CD8-positive, alpha-beta T cell (primary cell): ENCODE measurements at regions of chr2 and their contacts with region 1.

Region 1: GRCh38 chr2:189096769-189097447 is 82.7 kb downstream of the COL5A2 start:
- DNase-seq: no peak
- ATAC-seq: no peak
- H3K4me3 ChIP-seq: no peak overlapping the region
- H3K4me3 Mint-ChIP-seq: no peak overlapping the region
- H3K27ac ChIP-seq: no peak overlapping the region
- H3K27ac Mint-ChIP-seq: no peak overlapping the region
- H3K4me1 ChIP-seq: no peaks in the 10 kb centered on the region
- H3K4me1 Mint-ChIP-seq: no peaks in the 10 kb centered on the region
- H3K27me3 ChIP-seq: peaks cover 0 to 3% of the 10 kb centered on the region in 2 experiments
- H3K27me3 Mint-ChIP-seq: no peaks in the 10 kb centered on the region
- CTCF ChIP-seq: no peak

Region 2: GRCh38 chr2:188524519-188525113 is 572.3 kb before region 1 on chr2:
- CTCF ChIA-PET with region 1: no interaction called
- POLR2A ChIA-PET with region 1: no interaction called
- intact Hi-C with region 1: loop called in 1 of 2 experiments (anchors 10 kb)
- DNase-seq: peak in 2 of 9 experiments; percentile 27 to 37
- ATAC-seq: peak; percentile 48
- H3K4me3 ChIP-seq: no peak overlapping the region
- H3K4me3 Mint-ChIP-seq: no peak overlapping the region
- H3K27ac ChIP-seq: no peak overlapping the region
- H3K27ac Mint-ChIP-seq: no peak overlapping the region
- H3K4me1 ChIP-seq: no peaks in the 10 kb centered on the region
- H3K4me1 Mint-ChIP-seq: no peaks in the 10 kb centered on the region
- H3K27me3 ChIP-seq: no peaks in the 10 kb centered on the region
- H3K27me3 Mint-ChIP-seq: no peaks in the 10 kb centered on the region
- CTCF ChIP-seq: peak; percentile 63

Region 3: GRCh38 chr2:189082376-189082975 is 14.4 kb before region 1 on chr2:
- CTCF ChIA-PET with region 1: interaction called, 15 read pairs
- POLR2A ChIA-PET with region 1: no interaction called
- intact Hi-C with region 1: no loop called
- DNase-seq: no peak
- ATAC-seq: no peak
- H3K4me3 ChIP-seq: no peak overlapping the region
- H3K4me3 Mint-ChIP-seq: no peak overlapping the region
- H3K27ac ChIP-seq: no peak overlapping the region
- H3K27ac Mint-ChIP-seq: no peak overlapping the region
- H3K4me1 ChIP-seq: no peaks in the 10 kb centered on the region
- H3K4me1 Mint-ChIP-seq: no peaks in the 10 kb centered on the region
- H3K27me3 ChIP-seq: no peaks in the 10 kb centered on the region
- H3K27me3 Mint-ChIP-seq: no peaks in the 10 kb centered on the region
- CTCF ChIP-seq: no peak

Region 4: DNA sequence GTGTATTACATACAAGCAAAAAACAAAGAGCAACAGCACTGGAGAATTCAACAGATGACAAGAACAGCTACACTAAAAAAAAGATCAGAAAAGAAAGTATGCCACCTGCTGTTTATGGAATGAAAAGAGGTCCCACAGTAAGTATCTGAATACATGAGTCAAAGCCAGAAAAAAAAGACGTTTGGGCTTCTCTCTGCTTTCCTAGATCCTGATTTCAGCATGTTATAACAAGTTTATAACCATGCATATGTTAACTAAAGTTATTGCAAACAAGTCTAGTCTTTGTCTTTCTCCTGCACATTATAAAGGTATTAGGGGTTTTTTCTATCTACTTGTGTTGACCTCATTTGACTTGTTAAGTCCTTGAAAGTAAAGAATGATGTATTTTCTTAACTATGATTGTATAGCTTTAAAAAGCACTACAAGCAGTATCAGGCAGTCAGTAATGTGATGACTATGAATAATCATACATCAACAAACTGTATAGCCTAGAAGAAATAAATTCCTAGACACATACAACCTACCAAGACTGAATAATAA is 191.1 kb after region 1 on chr2:
- CTCF ChIA-PET with region 1: interaction called, 5 read pairs
- POLR2A ChIA-PET with region 1: no interaction called
- intact Hi-C with region 1: loop called (anchors 1 to 5 kb)
- DNase-seq: peak in 2 of 9 experiments; percentile 33 to 40
- ATAC-seq: no peak
- H3K4me3 ChIP-seq: no peak overlapping the region
- H3K4me3 Mint-ChIP-seq: no peak overlapping the region
- H3K27ac ChIP-seq: no peak overlapping the region
- H3K27ac Mint-ChIP-seq: no peak overlapping the region
- H3K4me1 ChIP-seq: peaks cover 4% of the 10 kb centered on the region
- H3K4me1 Mint-ChIP-seq: peaks cover 11% of the 10 kb centered on the region
- H3K27me3 ChIP-seq: no peaks in the 10 kb centered on the region
- H3K27me3 Mint-ChIP-seq: no peaks in the 10 kb centered on the region
- CTCF ChIP-seq: peak; percentile 41

Region 5: GRCh38 chr2:189347540-189347939 is 250.6 kb after region 1 on chr2:
- CTCF ChIA-PET with region 1: interaction called, 22 read pairs
- POLR2A ChIA-PET with region 1: no interaction called
- intact Hi-C with region 1: loop called (anchors 1 to 2 kb)
- DNase-seq: peak in 3 of 9 experiments; percentile 9 to 61 (median 52)
- ATAC-seq: peak; percentile 38
- H3K4me3 ChIP-seq: no peak overlapping the region
- H3K4me3 Mint-ChIP-seq: no peak overlapping the region
- H3K27ac ChIP-seq: no peak overlapping the region
- H3K27ac Mint-ChIP-seq: no peak overlapping the region
- H3K4me1 ChIP-seq: peaks cover 3% of the 10 kb centered on the region
- H3K4me1 Mint-ChIP-seq: peaks cover 16% of the 10 kb centered on the region
- H3K27me3 ChIP-seq: no peaks in the 10 kb centered on the region
- H3K27me3 Mint-ChIP-seq: no peaks in the 10 kb centered on the region
- CTCF ChIP-seq: peak; percentile 33

Region 6: GRCh38 chr2:189412330-189412953 is 315.5 kb after region 1 on chr2:
- CTCF ChIA-PET with region 1: interaction called, 26 read pairs
- POLR2A ChIA-PET with region 1: no interaction called
- intact Hi-C with region 1: loop called (anchors 1 kb)
- DNase-seq: peak in 7 of 9 experiments; percentile 29 to 68 (median 52)
- ATAC-seq: no peak
- H3K4me3 ChIP-seq: no peak overlapping the region
- H3K4me3 Mint-ChIP-seq: no peak overlapping the region
- H3K27ac ChIP-seq: no peak overlapping the region
- H3K27ac Mint-ChIP-seq: no peak overlapping the region
- H3K4me1 ChIP-seq: peaks cover 4% of the 10 kb centered on the region
- H3K4me1 Mint-ChIP-seq: peaks cover 7% of the 10 kb centered on the region
- H3K27me3 ChIP-seq: no peaks in the 10 kb centered on the region
- H3K27me3 Mint-ChIP-seq: no peaks in the 10 kb centered on the region
- CTCF ChIP-seq: peak; percentile 86